Activated CD4-positive, alpha-beta T cell treated with anti-CD3 and anti-CD28 coated beads for 36 hours (primary cell): ENCODE measurements at regions of chr19 and their contacts with region 1.

Region 1: DNA sequence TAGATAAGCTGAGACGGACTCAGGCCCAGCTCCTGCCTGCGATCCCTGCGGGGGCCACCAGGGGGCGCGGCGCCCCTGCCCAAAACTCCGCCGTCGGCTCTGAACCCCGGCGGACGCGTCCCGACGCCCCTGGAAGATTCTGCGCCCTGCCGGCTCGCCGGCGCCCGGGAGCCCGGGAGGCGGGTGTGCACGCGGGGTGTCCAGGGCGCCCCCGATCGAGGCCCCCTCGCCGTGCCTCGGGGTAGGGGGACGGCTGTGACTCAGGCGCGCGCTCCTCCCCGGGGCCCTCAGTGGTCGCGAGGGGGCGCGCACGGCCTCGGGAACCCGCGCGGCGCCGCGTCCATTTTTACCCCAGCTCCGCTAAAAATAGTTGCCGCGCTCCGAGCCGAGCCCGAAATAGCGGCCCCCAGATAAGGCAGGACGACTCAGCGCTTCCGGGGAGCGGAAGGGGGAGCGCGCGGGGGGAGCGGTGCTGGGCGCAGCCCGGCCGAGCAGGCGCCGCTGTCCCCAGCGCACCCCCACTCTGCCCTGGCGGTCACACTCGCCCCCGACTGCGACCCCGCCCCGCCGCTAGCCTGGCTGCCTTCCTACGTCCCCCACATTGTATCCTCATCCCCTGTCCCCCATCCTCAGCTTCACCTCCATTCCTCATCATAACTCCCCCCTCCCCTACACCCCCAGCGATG is 16.0 kb upstream of the ERCC1 start:
- DNase-seq: peak; percentile 90
- ATAC-seq: peak; percentile 70
- H3K4me3 Mint-ChIP-seq: peak overlapping the region; percentile 56
- H3K27ac Mint-ChIP-seq: peak overlapping the region; percentile 63
- H3K4me1 Mint-ChIP-seq: peaks cover 33% of the 10 kb centered on the region
- H3K27me3 Mint-ChIP-seq: no peaks in the 10 kb centered on the region

Region 2: GRCh38 chr19:45152504-45153338 is 287.0 kb before region 1 on chr19:
- CTCF ChIA-PET with region 1: no interaction called
- POLR2A ChIA-PET with region 1: no interaction called
- intact Hi-C with region 1: no loop called
- DNase-seq: peak; percentile 69
- ATAC-seq: peak; percentile 57
- H3K4me3 Mint-ChIP-seq: peak overlapping the region; percentile 42
- H3K27ac Mint-ChIP-seq: peak overlapping the region; percentile 47
- H3K4me1 Mint-ChIP-seq: peaks cover 18% of the 10 kb centered on the region
- H3K27me3 Mint-ChIP-seq: peaks cover 26% of the 10 kb centered on the region

Region 3: GRCh38 chr19:45423589-45424190 is 16.0 kb before region 1 on chr19 and contains the start of gene ERCC1:
- CTCF ChIA-PET with region 1: interaction called, 10 read pairs
- POLR2A ChIA-PET with region 1: no interaction called
- intact Hi-C with region 1: no loop called
- DNase-seq: peak; percentile 84
- ATAC-seq: peak; percentile 78
- H3K4me3 Mint-ChIP-seq: peak within 1 kb of the TSS; percentile 92
- H3K27ac Mint-ChIP-seq: peak within 1 kb of the TSS; percentile 95
- H3K4me1 Mint-ChIP-seq: peaks cover 55% of the 10 kb centered on the region
- H3K27me3 Mint-ChIP-seq: peaks cover 2% of the 10 kb centered on the region
- total RNA-seq, gene ERCC1: 58.1 to 71.8 TPM

Region 4: GRCh38 chr19:45455707-45456499 is 16.2 kb after region 1 on chr19:
- CTCF ChIA-PET with region 1: interaction called, 11 read pairs
- POLR2A ChIA-PET with region 1: no interaction called
- intact Hi-C with region 1: no loop called
- DNase-seq: peak; percentile 84
- ATAC-seq: peak; percentile 82
- H3K4me3 Mint-ChIP-seq: peak overlapping the region; percentile 5
- H3K27ac Mint-ChIP-seq: peak overlapping the region; percentile 65
- H3K4me1 Mint-ChIP-seq: peaks cover 23% of the 10 kb centered on the region
- H3K27me3 Mint-ChIP-seq: no peaks in the 10 kb centered on the region

Region 5: DNA sequence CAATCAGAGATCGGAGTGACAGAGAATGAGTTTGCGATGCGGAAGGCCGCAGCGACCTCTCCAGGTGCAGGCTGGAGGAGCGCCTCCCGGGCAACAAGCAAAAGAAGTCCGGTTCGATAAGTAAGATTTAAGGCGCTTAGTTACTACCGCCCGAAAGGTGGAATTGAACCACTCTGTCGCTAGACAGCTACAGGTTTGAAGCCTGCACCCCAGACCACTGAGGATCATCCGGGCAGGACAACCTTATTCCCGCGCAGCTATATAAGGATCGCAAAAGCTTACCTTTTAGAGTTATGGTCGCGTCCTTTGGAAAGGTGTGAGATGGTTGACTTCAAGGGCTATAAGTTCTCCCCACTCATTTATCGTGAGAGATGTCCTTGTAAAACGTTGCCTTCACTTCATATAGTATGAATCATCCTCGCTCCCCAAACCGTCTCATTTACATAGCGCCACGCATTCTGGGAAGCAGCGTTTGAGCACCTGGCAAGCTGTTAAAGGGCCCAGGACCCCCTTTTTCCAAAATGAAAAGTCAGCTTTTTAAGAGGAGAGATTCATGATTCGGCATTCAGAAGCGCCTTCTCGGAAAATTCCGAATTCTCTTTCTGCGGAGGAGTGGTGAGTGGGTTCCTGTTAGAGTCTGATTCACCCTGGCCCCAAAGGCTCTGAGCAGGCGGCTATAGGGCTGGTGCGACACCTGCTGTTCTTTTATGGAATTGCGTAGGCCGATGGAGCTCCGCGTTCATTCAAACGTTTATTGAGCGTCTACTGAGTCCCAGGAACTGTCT is 38.9 kb after region 1 on chr19:
- CTCF ChIA-PET with region 1: interaction called, 158 read pairs
- POLR2A ChIA-PET with region 1: interaction called, 18 read pairs
- intact Hi-C with region 1: loop called (anchors 1 kb)
- DNase-seq: peak; percentile 95
- ATAC-seq: peak; percentile 86
- H3K4me3 Mint-ChIP-seq: peak overlapping the region; percentile 60
- H3K27ac Mint-ChIP-seq: peak overlapping the region; percentile 73
- H3K4me1 Mint-ChIP-seq: peaks cover 24% of the 10 kb centered on the region
- H3K27me3 Mint-ChIP-seq: peaks cover 4% of the 10 kb centered on the region

Region 6: GRCh38 chr19:45496349-45496953 is 56.7 kb after region 1 on chr19:
- CTCF ChIA-PET with region 1: interaction called, 13 read pairs
- POLR2A ChIA-PET with region 1: no interaction called
- intact Hi-C with region 1: no loop called
- DNase-seq: peak; percentile 74
- ATAC-seq: peak; percentile 1
- H3K4me3 Mint-ChIP-seq: peak overlapping the region; percentile 6
- H3K27ac Mint-ChIP-seq: no peak overlapping the region
- H3K4me1 Mint-ChIP-seq: peaks cover 43% of the 10 kb centered on the region
- H3K27me3 Mint-ChIP-seq: peaks cover 31% of the 10 kb centered on the region

Region 7: GRCh38 chr19:45848922-45849321 is 409.2 kb after region 1 on chr19:
- CTCF ChIA-PET with region 1: no interaction called
- POLR2A ChIA-PET with region 1: no interaction called
- intact Hi-C with region 1: no loop called
- DNase-seq: no peak
- ATAC-seq: peak; percentile 58
- H3K4me3 Mint-ChIP-seq: no peak overlapping the region
- H3K27ac Mint-ChIP-seq: no peak overlapping the region
- H3K4me1 Mint-ChIP-seq: no peaks in the 10 kb centered on the region
- H3K27me3 Mint-ChIP-seq: no peaks in the 10 kb centered on the region